Activated CD4-positive, alpha-beta memory T cell treated with anti-CD3 and anti-CD28 coated beads for 36 hours (primary cell): ENCODE measurements at regions of chr5 and their contacts with region 1.

Region 1: DNA sequence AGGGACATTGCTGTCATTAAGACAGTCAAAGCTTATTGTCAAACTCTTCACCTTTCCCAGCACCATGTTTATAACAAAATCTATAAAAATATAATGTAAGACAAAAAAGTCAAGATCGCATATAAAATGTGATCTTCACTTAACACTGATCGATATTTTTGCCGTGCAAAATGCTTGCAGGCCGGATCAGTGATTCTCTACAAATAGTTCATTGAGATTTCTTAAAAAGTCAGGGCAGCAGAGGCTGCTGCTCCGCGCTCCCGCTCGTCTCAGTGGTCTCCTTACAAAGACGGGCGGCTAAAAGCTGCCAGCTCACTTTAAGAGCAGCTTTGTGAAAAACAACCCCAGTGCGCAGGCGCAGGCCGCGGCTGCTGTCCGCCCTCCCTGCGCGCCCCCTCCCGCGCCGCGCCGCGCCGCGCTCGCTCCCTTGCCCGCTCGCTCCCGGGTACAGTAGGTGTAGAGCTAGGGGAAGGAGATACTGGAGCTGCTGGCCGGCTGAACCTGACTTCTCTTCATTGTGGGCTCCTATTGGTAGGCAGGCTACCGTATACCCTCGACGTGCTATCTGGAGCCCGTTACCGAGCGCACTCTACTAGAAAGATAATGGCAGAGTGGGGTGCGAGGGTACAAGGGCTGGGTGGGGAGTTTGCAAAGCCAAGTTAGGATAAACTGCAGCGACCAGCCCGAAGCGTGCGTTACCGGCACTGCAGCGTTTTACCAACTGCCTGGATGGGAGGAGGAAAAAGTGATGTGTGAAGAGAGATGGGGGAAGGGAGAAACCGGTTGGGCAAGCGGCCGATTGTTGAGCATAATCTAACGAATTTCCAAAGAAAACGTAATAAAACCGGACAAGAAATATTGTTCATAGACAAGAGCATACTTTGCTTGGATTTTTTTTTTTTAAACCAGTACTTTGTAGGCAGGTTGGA is at the start of gene ARRDC3:
- DNase-seq: peak; percentile 98
- H3K4me3 Mint-ChIP-seq: peak within 1 kb of the TSS; percentile 86
- H3K27ac Mint-ChIP-seq: peak within 1 kb of the TSS; percentile 100
- H3K4me1 Mint-ChIP-seq: peaks cover 17% of the 10 kb centered on the region
- H3K27me3 Mint-ChIP-seq: no peaks in the 10 kb centered on the region
- total RNA-seq, gene ARRDC3: 17.9 to 19.0 TPM

Region 2: DNA sequence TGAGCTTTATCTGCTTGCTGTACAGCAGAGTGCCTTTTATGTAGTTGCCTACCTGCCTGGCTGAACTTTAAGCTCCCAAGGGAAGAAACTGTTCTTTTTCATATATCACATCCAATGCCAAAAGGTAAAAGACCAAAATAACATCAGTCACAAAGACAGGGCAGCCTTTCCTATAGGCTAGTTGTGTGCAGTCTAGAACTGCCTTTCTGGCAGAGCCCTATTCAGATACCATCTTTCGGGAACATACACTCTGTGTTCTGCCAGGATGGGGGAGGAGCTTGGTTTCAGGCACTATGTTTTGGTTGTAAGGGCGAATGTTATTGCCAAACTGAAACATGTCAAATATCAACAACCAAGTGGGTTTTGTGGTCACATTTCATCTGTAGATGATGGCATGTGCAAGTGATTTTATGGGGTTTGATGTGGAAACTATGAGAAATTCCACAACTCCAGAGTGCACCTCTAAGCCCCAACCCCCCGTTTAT is 510.2 kb before region 1 on chr5:
- CTCF ChIA-PET with region 1: interaction called, 43 read pairs
- POLR2A ChIA-PET with region 1: interaction called, 6 read pairs
- intact Hi-C with region 1: loop called (anchors 1 kb)
- DNase-seq: peak; percentile 40
- H3K4me3 Mint-ChIP-seq: no peak overlapping the region
- H3K27ac Mint-ChIP-seq: no peak overlapping the region
- H3K4me1 Mint-ChIP-seq: peaks cover 23% of the 10 kb centered on the region
- H3K27me3 Mint-ChIP-seq: peaks cover 33% of the 10 kb centered on the region

Region 3: GRCh38 chr5:91162534-91163381 is 220.5 kb before region 1 on chr5:
- CTCF ChIA-PET with region 1: interaction called, 10 read pairs
- POLR2A ChIA-PET with region 1: interaction called, 8 read pairs
- intact Hi-C with region 1: loop called (anchors 1 kb)
- DNase-seq: peak; percentile 86
- H3K4me3 Mint-ChIP-seq: no peak overlapping the region
- H3K27ac Mint-ChIP-seq: peak overlapping the region; percentile 67
- H3K4me1 Mint-ChIP-seq: peaks cover 19% of the 10 kb centered on the region
- H3K27me3 Mint-ChIP-seq: no peaks in the 10 kb centered on the region

Region 4: GRCh38 chr5:91225848-91226686 is 157.2 kb before region 1 on chr5:
- CTCF ChIA-PET with region 1: interaction called, 226 read pairs
- POLR2A ChIA-PET with region 1: interaction called, 10 read pairs
- intact Hi-C with region 1: loop called (anchors 1 kb)
- DNase-seq: peak; percentile 73
- H3K4me3 Mint-ChIP-seq: no peak overlapping the region
- H3K27ac Mint-ChIP-seq: peak overlapping the region; percentile 13
- H3K4me1 Mint-ChIP-seq: peaks cover 4% of the 10 kb centered on the region
- H3K27me3 Mint-ChIP-seq: peaks cover 7% of the 10 kb centered on the region

Region 5: GRCh38 chr5:91266184-91266705 is 117.0 kb before region 1 on chr5:
- CTCF ChIA-PET with region 1: interaction called, 13 read pairs
- POLR2A ChIA-PET with region 1: interaction called, 8 read pairs
- intact Hi-C with region 1: loop called (anchors 5 kb)
- DNase-seq: no peak
- H3K4me3 Mint-ChIP-seq: no peak overlapping the region
- H3K27ac Mint-ChIP-seq: no peak overlapping the region
- H3K4me1 Mint-ChIP-seq: peaks cover 21% of the 10 kb centered on the region
- H3K27me3 Mint-ChIP-seq: no peaks in the 10 kb centered on the region

Region 6: DNA sequence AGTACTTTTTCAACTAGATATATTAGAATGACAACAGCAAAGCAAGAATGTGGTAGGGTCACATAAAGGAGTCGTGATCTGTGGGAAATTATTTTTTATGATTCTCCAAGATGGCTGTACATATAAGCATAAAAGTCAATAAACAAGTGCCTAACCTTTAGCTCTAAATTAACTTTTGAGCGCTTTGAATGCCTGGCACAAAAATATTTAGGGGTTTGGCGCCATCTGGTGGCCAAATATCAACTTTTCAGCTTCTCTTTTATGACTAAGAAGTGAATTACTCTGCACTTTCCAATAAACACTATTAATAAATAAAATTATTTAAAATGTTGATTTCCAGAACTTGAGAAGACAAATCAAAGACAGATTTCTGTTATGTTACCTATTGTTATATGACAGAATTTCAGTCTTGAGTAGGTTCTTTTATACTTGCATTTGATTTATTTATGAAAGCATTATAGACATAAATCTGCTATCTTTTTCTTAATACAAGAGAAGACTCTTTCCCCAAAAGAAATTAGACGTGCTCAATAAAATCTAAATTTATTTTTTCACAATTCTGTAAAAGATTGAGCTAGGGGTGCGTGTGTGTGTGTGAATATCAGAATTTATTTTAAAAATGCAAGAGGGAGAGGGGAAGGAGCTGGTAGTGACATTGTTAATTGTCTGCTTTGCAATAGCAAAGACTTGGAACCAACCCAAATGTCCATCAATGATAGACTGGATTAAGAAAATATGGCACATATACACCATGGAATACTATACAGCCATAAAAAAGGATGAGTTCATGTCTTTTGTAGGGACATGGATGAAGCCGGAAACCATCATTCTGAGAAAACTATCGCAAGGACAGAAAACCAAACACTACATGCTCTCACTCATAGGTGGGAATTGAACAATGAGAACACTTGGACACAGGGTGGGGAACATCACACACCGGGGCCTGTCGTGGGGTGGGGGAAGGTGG is 36.6 kb after region 1 on chr5:
- CTCF ChIA-PET with region 1: interaction called, 118 read pairs
- POLR2A ChIA-PET with region 1: no interaction called
- intact Hi-C with region 1: loop called (anchors 1 kb)
- DNase-seq: peak; percentile 74
- H3K4me3 Mint-ChIP-seq: no peak overlapping the region
- H3K27ac Mint-ChIP-seq: no peak overlapping the region
- H3K4me1 Mint-ChIP-seq: no peaks in the 10 kb centered on the region
- H3K27me3 Mint-ChIP-seq: no peaks in the 10 kb centered on the region